ENCODE measurements at regions of chr11 and their contacts with region 1.

Region 1: GRCh38 chr11:117807482-117808327 is 10.7 kb upstream of the DSCAML1 start:
- DNase-seq: peak; percentile 80
- H3K4me3 Mint-ChIP-seq: no peak overlapping the region
- H3K27ac Mint-ChIP-seq: no peak overlapping the region
- H3K4me1 Mint-ChIP-seq: peaks cover 18% of the 10 kb centered on the region
- H3K27me3 Mint-ChIP-seq: peaks cover 10% of the 10 kb centered on the region

Region 2: DNA sequence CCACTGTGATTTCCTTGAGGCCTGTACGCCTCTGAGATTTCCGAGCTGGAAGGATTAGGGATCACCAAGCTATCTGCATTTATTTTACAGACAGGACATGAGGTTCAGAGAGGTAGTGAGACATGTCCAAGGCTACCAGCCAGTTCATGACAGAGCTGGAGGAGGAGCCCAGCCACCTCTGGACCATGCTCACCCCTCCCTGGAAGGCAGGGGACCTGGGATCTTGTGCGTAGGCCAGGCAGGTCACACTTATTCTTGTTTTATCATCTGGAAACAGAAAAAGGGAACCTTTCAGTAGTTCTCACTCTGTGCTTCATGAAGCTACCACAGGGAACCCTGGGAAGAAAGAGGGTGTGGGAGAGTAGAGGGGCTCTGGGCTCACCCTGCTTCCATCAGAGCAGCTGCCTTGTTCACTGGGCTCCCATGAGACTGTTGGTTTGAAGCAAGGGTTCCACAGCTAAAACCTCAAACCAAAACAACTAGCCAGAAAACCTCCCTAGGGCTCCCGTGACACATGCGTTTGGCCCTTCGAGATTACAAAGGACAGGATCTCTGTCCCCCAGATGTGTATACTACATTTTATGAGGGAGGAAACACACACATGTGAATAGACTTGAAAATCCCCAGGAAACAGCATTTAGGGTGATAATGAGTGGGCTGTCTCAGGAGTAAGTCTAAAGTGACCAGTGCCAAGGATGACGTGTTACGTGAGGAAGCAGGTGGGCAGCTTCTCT is 117.1 kb before region 1 on chr11:
- CTCF ChIA-PET with region 1: no interaction called
- POLR2A ChIA-PET with region 1: no interaction called
- DNase-seq: no peak
- H3K4me3 Mint-ChIP-seq: no peak overlapping the region
- H3K27ac Mint-ChIP-seq: no peak overlapping the region
- H3K4me1 Mint-ChIP-seq: no peaks in the 10 kb centered on the region
- H3K27me3 Mint-ChIP-seq: peaks cover 2% of the 10 kb centered on the region

Region 3: DNA sequence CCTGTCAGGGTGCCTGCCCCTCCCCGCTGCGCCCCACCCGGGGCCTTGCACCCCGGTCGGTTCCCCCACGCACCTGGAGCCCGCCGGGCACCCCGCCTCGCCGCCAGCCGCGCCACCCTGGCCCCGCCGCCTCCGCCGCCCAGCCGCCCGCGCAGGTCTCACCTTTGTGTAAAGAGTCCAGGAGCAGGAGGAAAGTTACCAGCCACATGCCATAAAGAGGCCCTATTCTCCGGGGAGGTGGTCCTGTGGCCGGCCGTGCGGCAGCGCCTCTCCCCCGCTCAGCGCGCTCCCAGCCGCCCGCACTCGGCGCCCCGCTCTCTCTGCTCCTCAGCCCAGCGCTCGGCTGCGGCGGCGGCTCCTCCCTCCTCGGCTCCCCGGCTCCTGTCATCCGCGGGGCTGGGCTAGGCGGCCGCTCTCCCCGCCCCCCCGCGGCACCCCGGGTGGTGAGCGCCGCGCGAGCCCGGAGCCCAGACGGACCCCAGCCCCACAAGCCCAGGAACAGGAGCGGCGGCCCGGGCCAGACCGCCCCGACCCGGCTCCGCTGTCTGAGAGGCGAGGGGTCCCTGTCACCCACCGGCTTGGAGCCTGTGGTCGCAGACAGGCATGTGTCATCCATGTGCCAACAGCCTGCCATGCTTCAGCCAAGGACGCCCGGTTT is 10.7 kb before region 1 on chr11 and contains the start of gene DSCAML1:
- CTCF ChIA-PET with region 1: interaction called, 12 read pairs
- POLR2A ChIA-PET with region 1: no interaction called
- DNase-seq: peak; percentile 27
- H3K4me3 Mint-ChIP-seq: peak within 1 kb of the TSS; percentile 29
- H3K27ac Mint-ChIP-seq: no peak within 1 kb of the TSS
- H3K4me1 Mint-ChIP-seq: peaks cover 4% of the 10 kb centered on the region
- H3K27me3 Mint-ChIP-seq: peaks cover 71% of the 10 kb centered on the region
- total RNA-seq, gene DSCAML1: 0.02 to 0.25 TPM

Region 4: DNA sequence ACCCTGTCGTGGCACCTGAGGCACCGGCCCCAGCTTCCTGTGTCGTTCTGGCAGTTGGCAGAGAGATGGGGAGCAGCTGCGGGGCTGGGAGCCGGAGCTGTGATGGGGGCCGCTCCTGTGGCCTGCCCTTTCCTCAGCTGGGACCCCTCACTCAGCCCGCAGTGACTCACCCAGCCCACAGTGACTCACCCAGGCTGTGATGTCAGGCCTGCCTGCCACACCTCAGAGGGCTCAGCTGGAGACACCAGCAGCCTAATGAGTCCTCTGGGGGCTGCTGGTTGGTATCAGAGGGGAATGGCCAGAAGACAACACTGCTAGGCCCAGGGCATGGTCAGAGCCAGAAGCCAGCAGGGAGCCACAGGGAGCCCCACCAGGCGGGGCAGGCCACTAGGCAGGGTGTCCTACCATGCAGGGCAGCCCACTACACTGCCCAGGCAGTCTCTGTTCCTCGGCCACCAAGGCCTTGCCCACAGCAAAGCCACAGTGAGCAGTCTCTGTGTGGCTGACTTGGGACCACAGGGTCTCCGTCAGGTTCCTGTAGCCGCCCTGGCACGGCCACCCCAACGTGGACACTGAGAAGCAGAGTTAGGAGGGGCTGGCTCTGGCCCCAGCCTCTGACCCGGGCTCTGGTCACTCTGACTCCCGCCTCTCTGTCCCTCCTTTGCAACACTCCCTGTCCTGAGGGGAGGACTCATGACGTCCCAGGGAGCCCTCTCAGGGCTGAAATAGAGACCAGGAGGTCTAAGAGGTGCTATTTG is 21.1 kb after region 1 on chr11:
- CTCF ChIA-PET with region 1: interaction called, 27 read pairs
- POLR2A ChIA-PET with region 1: no interaction called
- DNase-seq: peak; percentile 70
- H3K4me3 Mint-ChIP-seq: peak overlapping the region; percentile 13
- H3K27ac Mint-ChIP-seq: peak overlapping the region; percentile 82
- H3K4me1 Mint-ChIP-seq: peaks cover 58% of the 10 kb centered on the region
- H3K27me3 Mint-ChIP-seq: peaks cover 2% of the 10 kb centered on the region

Region 5: DNA sequence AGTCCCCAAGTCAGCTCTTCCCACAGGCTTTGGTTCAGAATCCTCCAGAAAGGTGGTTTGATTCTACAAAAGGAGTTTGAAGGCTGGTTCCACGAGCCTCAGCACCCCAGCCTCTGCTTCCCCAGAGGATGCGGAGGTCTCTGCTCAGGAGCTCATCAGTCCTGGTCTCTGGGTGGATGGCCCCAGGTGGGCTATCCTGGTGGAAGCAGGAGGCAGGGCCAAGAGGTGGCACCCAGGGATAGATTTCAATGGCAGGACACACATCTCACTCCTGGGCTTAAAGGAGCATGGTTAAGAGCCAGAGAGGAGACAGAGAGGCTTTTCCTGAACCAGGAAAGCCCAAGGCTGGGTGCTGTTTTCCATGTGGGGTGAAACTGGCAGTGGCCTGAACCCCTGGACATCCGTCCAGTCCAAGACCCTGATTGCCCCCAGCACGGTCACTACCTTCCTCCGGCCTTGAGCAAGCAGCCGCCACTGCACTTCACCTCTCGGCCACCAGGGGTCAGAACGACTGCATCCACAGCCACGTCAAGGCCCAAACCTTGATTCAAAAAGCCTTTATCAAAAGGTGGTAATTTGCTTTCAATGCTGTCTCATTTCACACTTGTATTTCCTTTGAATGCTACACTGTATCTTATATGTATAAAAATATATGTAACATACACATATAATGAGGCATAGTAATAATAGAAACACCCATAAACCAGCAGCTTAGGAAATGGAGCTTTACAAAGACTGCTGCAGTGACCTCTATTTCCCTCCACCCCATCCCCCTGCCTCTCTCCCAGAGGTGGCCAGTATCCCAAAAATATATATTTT is 36.2 kb after region 1 on chr11:
- CTCF ChIA-PET with region 1: interaction called, 14 read pairs
- POLR2A ChIA-PET with region 1: no interaction called
- DNase-seq: peak; percentile 84
- H3K4me3 Mint-ChIP-seq: no peak overlapping the region
- H3K27ac Mint-ChIP-seq: no peak overlapping the region
- H3K4me1 Mint-ChIP-seq: no peaks in the 10 kb centered on the region
- H3K27me3 Mint-ChIP-seq: peaks cover 6% of the 10 kb centered on the region

Region 6: DNA sequence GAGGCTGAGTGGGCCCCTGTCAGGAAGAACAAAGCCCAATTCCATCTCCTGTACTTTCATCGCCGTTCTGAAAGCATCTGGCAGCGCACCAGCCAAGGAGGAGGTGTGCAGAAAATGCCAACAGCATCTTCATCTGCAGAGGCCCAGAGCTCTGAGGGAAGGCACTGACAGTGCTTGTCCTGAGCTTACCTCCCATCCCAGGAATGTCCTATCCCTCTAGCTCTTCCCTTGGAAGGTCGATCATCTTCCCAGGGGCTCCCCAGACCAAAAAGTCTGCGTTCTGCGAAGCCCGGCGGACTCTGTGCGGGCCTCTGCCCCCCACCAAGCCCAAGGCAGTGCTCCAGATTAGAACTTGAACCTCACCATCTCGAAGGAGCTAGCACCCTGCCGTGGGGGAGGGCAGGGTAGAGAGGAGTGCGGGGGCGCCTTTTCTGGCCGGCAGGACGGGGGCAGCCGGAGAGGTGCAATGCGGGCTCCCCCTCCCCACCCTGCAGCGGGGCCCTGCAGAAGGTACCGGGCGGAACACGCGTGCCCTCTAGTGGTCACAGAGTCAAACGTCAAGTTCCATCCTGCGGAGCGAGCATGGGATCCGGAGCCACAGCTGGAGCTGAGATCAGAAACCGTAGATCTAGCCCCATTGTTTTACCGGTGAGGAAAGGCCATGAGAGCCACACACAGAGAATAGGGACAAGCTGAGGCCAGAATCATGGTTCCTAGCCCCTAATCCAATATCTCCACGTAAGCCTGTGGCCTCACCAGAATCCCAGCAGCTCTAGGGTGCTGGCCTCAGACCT is 363.8 kb after region 1 on chr11:
- CTCF ChIA-PET with region 1: interaction called, 13 read pairs
- POLR2A ChIA-PET with region 1: no interaction called
- DNase-seq: peak; percentile 84
- H3K4me3 Mint-ChIP-seq: no peak overlapping the region
- H3K27ac Mint-ChIP-seq: no peak overlapping the region
- H3K4me1 Mint-ChIP-seq: peaks cover 5% of the 10 kb centered on the region
- H3K27me3 Mint-ChIP-seq: peaks cover 16% of the 10 kb centered on the region

Measured in activated CD4-positive, alpha-beta T cell treated with anti-CD3 and anti-CD28 coated beads, Interleukin-2, amount 10 ng/mL, durations not matched to agents 7 days and 5 days (primary cell).